OCI-LY7 (cell line): ENCODE measurements at regions of chr1 and their contacts with region 1.

Region 1: GRCh38 chr1:87800006-87800405 is 471.3 kb downstream of the LMO4 start:
- DNase-seq: no peak
- H3K4me3 ChIP-seq: no peak overlapping the region
- H3K27ac ChIP-seq: no peak overlapping the region
- H3K4me1 ChIP-seq: no peaks in the 10 kb centered on the region
- CTCF ChIP-seq: no peak

Region 2: DNA sequence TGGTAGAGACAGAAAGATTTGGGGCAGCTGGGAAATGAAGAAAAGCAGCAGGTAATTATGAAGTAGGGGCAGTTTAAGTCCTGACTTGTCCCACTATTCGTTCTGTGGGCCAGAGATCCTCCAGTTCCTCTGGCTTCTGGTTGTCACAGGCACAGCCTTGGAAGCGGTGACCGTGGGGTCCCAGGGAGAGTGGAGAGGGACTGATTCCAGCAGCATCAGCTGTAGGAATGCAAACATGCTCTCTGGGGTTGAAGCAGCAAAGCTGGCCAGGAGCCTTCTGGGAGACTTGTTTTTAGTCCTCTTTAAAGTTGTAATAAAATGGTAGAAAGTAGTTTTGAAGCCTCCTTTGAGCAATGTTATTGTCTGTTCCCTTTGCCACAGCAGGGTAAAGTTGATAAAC is 16.6 kb after region 1 on chr1:
- CTCF ChIA-PET with region 1: no interaction called
- POLR2A ChIA-PET with region 1: no interaction called
- intact Hi-C with region 1: no loop called
- DNase-seq: no peak
- H3K4me3 ChIP-seq: no peak overlapping the region
- H3K27ac ChIP-seq: no peak overlapping the region
- H3K4me1 ChIP-seq: no peaks in the 10 kb centered on the region
- CTCF ChIP-seq: no peak

Region 3: DNA sequence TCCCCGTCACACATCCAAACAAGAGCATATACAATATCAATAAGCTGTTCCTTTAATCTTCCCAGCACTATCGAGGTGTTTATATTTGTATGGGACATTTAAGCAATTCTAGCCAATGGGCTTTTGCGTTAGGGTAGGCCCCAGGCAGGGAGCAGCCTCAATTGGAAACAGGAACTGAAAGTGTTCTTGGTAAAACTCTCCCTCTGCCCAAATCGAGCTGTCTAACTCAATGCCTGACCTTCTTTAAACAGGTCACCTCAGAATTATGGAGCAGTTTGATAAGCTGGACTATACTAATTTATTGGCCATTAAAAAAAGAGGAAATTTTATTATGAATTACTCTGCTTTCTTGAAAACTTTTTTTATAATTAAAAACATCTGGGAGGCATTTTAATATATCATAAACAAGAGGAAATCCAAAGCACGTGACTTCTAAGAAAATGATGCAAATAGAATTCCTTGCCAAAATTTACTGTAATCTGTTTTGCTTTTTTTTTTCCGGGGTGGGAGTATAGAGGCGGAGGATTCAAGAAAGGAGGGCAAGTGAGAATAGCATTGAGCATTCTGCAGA is 26.8 kb after region 1 on chr1:
- CTCF ChIA-PET with region 1: no interaction called
- POLR2A ChIA-PET with region 1: no interaction called
- intact Hi-C with region 1: loop called (anchors 1 kb)
- DNase-seq: peak; percentile 75
- H3K4me3 ChIP-seq: no peak overlapping the region
- H3K27ac ChIP-seq: no peak overlapping the region
- H3K4me1 ChIP-seq: peaks cover 5% of the 10 kb centered on the region
- CTCF ChIP-seq: no peak